ENCODE measurements at regions of chr7 and their contacts with region 1.

Region 1: GRCh38 chr7:100221231-100221718 is 1.5 kb downstream of the PVRIG start:
- DNase-seq: peak; percentile 98
- H3K4me3 ChIP-seq: peak overlapping the region; percentile 92
- H3K27ac ChIP-seq: peak overlapping the region; percentile 96
- H3K4me1 ChIP-seq: peaks cover 76% of the 10 kb centered on the region
- CTCF ChIP-seq: no peak

Region 2: GRCh38 chr7:100148559-100149350 is 72.5 kb before region 1 on chr7 and contains the start of gene LAMTOR4:
- CTCF ChIA-PET with region 1: no interaction called
- POLR2A ChIA-PET with region 1: interaction called, 4 read pairs
- intact Hi-C with region 1: loop called (anchors 5 kb)
- DNase-seq: peak; percentile 100
- H3K4me3 ChIP-seq: peak within 1 kb of the TSS; percentile 84
- H3K27ac ChIP-seq: peak within 1 kb of the TSS; percentile 66
- H3K4me1 ChIP-seq: peaks cover 39% of the 10 kb centered on the region
- CTCF ChIP-seq: no peak
- total RNA-seq, gene LAMTOR4: 243 and 263 TPM in 2 replicates

Region 3: GRCh38 chr7:100190048-100190711 is 31.1 kb before region 1 on chr7:
- CTCF ChIA-PET with region 1: interaction called, 4 read pairs
- POLR2A ChIA-PET with region 1: interaction called, 37 read pairs
- intact Hi-C with region 1: loop called (anchors 1 kb)
- DNase-seq: peak; percentile 90
- H3K4me3 ChIP-seq: peak overlapping the region; percentile 48
- H3K27ac ChIP-seq: peak overlapping the region; percentile 95
- H3K4me1 ChIP-seq: peaks cover 71% of the 10 kb centered on the region
- CTCF ChIP-seq: peak; percentile 84

Region 4: GRCh38 chr7:100195222-100195621 is 26.1 kb before region 1 on chr7:
- CTCF ChIA-PET with region 1: interaction called, 3 read pairs
- POLR2A ChIA-PET with region 1: interaction called, 37 read pairs
- intact Hi-C with region 1: loop called (anchors 1 kb)
- DNase-seq: peak; percentile 54
- H3K4me3 ChIP-seq: peak overlapping the region; percentile 11
- H3K27ac ChIP-seq: peak overlapping the region; percentile 95
- H3K4me1 ChIP-seq: peaks cover 95% of the 10 kb centered on the region
- CTCF ChIP-seq: no peak

Region 5: DNA sequence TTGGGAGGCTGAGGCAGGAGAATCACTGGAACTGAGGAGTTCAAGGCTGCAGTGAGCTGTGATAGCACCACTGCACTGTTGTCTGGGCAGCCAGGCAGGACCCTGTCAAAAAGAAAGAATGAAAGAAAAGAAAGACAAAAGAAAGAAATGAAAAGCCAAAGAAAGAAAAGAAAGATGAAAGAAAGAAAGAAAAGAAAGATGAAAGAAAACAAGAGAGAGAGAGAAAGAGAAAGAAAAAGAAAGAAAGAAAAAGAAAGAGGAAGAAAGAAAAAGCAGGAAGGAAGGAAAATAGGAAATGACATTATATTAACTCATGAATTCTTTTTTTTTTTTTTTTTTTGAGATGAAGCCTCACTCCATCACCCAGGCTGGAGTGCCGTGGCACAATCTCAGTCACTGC is 53.8 kb after region 1 on chr7:
- CTCF ChIA-PET with region 1: no interaction called
- POLR2A ChIA-PET with region 1: no interaction called
- intact Hi-C with region 1: no loop called
- DNase-seq: no peak
- H3K4me3 ChIP-seq: no peak overlapping the region
- H3K27ac ChIP-seq: no peak overlapping the region
- H3K4me1 ChIP-seq: peaks cover 8% of the 10 kb centered on the region
- CTCF ChIP-seq: no peak

Measured in OCI-LY7 (cell line).